ENCODE measurements at regions of chr6 and their contacts with region 1.

Region 1: DNA sequence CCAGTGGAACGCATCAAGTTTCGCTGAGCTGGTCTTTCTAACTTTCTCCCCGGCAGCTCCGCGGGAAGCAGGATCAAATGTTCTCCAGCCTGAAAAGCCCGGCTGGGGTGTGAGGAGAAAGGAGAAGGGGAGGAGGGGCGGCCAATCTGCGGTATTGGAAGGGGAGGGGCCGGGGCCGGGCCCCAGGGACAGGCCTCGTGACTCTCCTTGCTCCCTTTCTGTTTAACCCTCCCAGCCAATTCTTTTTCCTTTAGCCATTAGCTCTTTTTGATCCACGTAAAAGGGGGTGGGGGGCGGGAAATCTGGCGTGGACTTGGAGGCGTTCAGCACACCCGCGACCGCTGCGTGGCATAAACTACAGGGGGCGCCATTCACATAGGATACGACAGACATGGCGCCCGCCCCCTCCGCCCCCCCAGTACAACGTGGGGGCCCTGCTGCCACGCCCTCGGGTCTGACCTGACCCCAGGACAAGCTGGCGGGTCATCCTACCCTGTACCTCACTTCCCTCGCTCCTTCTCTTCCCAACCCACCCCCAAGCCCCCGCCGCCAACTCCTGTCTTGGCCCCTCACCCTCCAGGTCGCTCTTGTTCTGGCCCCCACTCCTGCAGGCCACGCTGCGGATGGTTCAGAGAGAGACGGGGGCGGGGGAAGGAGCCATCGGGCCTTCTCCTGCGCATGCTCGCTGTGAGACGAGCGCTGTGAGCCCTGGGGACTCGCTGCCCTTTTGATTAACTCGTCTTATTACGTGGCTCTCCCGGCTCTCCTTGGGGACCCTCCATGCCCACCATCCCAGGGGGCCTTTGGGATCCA is 7.8 kb upstream of the MDGA1 start:
- DNase-seq: peak; percentile 85
- ATAC-seq: peak; percentile 88
- H3K4me3 Mint-ChIP-seq: peak overlapping the region; percentile 62
- H3K27ac Mint-ChIP-seq: peak overlapping the region; percentile 78
- H3K4me1 Mint-ChIP-seq: peaks cover 8% of the 10 kb centered on the region
- H3K27me3 Mint-ChIP-seq: peaks cover 4% of the 10 kb centered on the region
- CTCF ChIP-seq: peak; percentile 86

Region 2: GRCh38 chr6:38012573-38012972 is 307.1 kb after region 1 on chr6:
- CTCF ChIA-PET with region 1: interaction called, 3 read pairs
- POLR2A ChIA-PET with region 1: no interaction called
- intact Hi-C with region 1: loop called (anchors 10 kb)
- DNase-seq: peak; percentile 39
- ATAC-seq: peak; percentile 80
- H3K4me3 Mint-ChIP-seq: no peak overlapping the region
- H3K27ac Mint-ChIP-seq: no peak overlapping the region
- H3K4me1 Mint-ChIP-seq: peaks cover 29% of the 10 kb centered on the region
- H3K27me3 Mint-ChIP-seq: no peaks in the 10 kb centered on the region
- CTCF ChIP-seq: peak; percentile 69